ENCODE measurements at regions of chr7 and their contacts with region 1.

Region 1: DNA sequence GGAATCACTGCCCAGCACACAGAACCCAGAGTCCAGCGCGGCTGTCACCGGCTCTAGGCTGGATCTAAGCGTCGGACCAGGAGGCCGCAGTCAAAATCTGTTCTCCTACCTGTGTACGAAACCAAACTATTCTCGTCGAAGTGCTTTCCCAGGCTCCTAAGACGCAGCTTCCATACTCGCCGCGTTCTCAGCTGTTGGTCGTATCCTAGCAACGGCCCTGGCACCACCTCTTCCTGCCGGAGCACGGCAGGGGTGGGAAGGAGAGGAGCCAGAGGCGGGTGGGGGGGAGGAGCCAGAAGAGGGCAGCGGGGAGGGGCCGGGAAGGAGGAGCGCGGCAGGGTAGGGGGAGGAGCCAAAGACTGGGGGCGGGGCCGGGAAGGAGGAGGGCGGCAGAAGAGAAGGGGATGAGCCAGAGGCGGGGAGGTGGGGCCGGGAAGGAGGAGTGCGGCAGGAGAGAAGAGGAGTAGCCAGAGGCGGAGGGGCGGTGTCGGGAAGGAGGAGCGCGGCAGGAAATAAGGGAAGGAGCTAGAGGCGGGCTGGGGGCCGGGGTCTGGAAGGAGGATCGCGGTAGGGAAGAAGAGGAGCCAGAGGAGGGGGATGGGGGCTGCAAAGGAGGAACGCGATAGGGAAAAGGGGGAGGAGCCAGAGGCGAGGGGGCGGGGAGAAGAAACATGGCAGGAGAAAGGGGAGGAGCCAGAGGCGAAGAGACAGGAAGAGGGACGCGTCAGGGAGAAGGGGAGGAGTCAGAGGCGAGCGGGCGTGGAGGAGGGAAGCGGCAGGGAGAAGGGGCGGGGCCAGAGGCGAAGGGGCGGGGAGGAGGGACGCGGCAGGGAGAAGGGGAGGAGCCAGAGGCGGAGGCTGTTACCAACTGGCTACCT is at the start of gene IQUB:
- DNase-seq: peak; percentile 86 to 96 (median 93)
- H3K4me3 ChIP-seq: peak within 1 kb of the TSS; percentile 55
- H3K4me3 Mint-ChIP-seq: peak within 1 kb of the TSS; percentile 90 to 97 (median 93)
- H3K27ac ChIP-seq: peak within 1 kb of the TSS; percentile 67
- H3K27ac Mint-ChIP-seq: peak within 1 kb of the TSS; percentile 71 to 94 (median 90)
- H3K4me1 ChIP-seq: peaks cover 15% of the 10 kb centered on the region
- H3K4me1 Mint-ChIP-seq: peaks cover 20 to 38% (median 33%) of the 10 kb centered on the region in 3 donors
- H3K27me3 ChIP-seq: no peaks in the 10 kb centered on the region
- H3K27me3 Mint-ChIP-seq: peaks cover 15 to 18% of the 10 kb centered on the region in 2 donors
- total RNA-seq, gene IQUB: not detected

Region 2: GRCh38 chr7:123494193-123494796 is 40.3 kb before region 1 on chr7:
- CTCF ChIA-PET with region 1: interaction called, 14 read pairs
- POLR2A ChIA-PET with region 1: no interaction called
- DNase-seq: peak in 2 of 5 donors; percentile 9 to 27
- H3K4me3 ChIP-seq: no peak overlapping the region
- H3K4me3 Mint-ChIP-seq: no peak overlapping the region
- H3K27ac ChIP-seq: no peak overlapping the region
- H3K27ac Mint-ChIP-seq: no peak overlapping the region
- H3K4me1 ChIP-seq: no peaks in the 10 kb centered on the region
- H3K4me1 Mint-ChIP-seq: peaks cover 0 to 4% (median 2%) of the 10 kb centered on the region in 3 donors
- H3K27me3 ChIP-seq: peaks cover 6% of the 10 kb centered on the region
- H3K27me3 Mint-ChIP-seq: peaks cover 3 to 38% of the 10 kb centered on the region in 2 donors

Region 3: DNA sequence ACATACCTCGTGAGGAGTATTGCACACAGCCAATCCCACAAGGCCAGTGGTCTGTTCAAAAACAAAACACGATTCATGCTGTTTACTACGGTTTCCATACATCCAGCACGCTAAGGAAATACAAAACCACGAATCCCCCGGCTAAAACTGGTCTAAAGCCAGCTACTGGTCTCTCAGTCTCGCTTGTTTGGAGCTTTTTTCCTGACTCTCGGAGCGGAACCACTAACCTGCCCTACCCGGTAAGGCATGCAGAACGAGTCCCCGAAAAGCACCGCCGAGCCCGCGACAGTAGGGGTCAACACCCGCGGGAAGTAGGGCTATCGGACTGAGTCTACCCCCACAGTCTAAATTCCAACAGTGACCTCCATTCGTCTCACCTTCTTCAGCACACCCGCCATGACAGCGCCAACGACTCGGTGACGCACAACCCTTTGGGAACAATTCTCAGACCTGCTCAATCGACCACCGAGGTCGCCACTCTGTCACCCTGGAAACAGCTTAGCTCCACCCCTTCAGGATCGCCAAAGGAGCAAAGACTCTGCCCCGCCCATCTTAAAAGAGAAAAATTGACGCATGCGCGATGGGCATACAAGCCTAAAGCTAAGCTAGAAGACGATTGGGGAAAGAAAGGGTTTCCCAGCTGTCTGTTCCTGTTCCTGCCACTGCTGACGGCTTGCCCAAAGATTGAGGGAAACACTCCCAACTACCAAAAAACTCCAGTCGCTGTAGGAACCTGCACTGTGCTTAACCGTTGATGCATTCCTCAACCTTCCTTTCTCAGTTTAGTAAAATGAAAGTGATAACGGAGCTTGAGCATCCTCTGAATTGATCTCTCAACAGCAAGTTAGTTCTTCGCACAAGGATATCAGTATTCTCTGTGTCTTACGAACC is 23.0 kb after region 1 on chr7 and contains the start of gene NDUFA5:
- CTCF ChIA-PET with region 1: interaction called, 3 read pairs
- POLR2A ChIA-PET with region 1: interaction called, 15 read pairs
- DNase-seq: peak; percentile 91 to 99 (median 97)
- H3K4me3 ChIP-seq: peak within 1 kb of the TSS; percentile 95
- H3K4me3 Mint-ChIP-seq: no peak within 1 kb of the TSS
- H3K27ac ChIP-seq: peak within 1 kb of the TSS; percentile 90
- H3K27ac Mint-ChIP-seq: no peak within 1 kb of the TSS
- H3K4me1 ChIP-seq: peaks cover 32% of the 10 kb centered on the region
- H3K4me1 Mint-ChIP-seq: peaks cover 13 to 14% (median 13%) of the 10 kb centered on the region in 3 donors
- H3K27me3 ChIP-seq: no peaks in the 10 kb centered on the region
- H3K27me3 Mint-ChIP-seq: peaks cover 0 to 3% of the 10 kb centered on the region in 2 donors
- total RNA-seq, gene NDUFA5: 61.3 to 66.3 TPM